Panc1 (cell line): ENCODE measurements at regions of chr2 and their contacts with region 1.

Region 1: GRCh38 chr2:165601928-165602521 is 132.5 kb downstream of the CSRNP3 start:
- DNase-seq: no peak
- ATAC-seq: no peak
- H3K4me3 ChIP-seq: no peak overlapping the region
- H3K27ac ChIP-seq: no peak overlapping the region
- H3K4me1 ChIP-seq: no peaks in the 10 kb centered on the region
- H3K27me3 ChIP-seq: no peaks in the 10 kb centered on the region
- CTCF ChIP-seq: no peak

Region 2: GRCh38 chr2:165549619-165550018 is 52.4 kb before region 1 on chr2:
- CTCF ChIA-PET with region 1: no interaction called
- POLR2A ChIA-PET with region 1: no interaction called
- in situ Hi-C with region 1: no loop called
- intact Hi-C with region 1: no loop called
- DNase-seq: no peak
- ATAC-seq: no peak
- H3K4me3 ChIP-seq: no peak overlapping the region
- H3K27ac ChIP-seq: no peak overlapping the region
- H3K4me1 ChIP-seq: no peaks in the 10 kb centered on the region
- H3K27me3 ChIP-seq: no peaks in the 10 kb centered on the region
- CTCF ChIP-seq: no peak

Region 3: GRCh38 chr2:165634855-165635254 is 32.8 kb after region 1 on chr2:
- CTCF ChIA-PET with region 1: no interaction called
- POLR2A ChIA-PET with region 1: no interaction called
- in situ Hi-C with region 1: no loop called
- intact Hi-C with region 1: no loop called
- DNase-seq: no peak
- ATAC-seq: no peak
- H3K4me3 ChIP-seq: no peak overlapping the region
- H3K27ac ChIP-seq: no peak overlapping the region
- H3K4me1 ChIP-seq: no peaks in the 10 kb centered on the region
- H3K27me3 ChIP-seq: no peaks in the 10 kb centered on the region
- CTCF ChIP-seq: no peak

Region 4: GRCh38 chr2:166607880-166608279 is 1005.9 kb after region 1 on chr2:
- CTCF ChIA-PET with region 1: interaction called, 10 read pairs
- POLR2A ChIA-PET with region 1: no interaction called
- in situ Hi-C with region 1: no loop called
- intact Hi-C with region 1: no loop called
- DNase-seq: no peak
- ATAC-seq: no peak
- H3K4me3 ChIP-seq: no peak overlapping the region
- H3K27ac ChIP-seq: no peak overlapping the region
- H3K4me1 ChIP-seq: no peaks in the 10 kb centered on the region
- H3K27me3 ChIP-seq: no peaks in the 10 kb centered on the region
- CTCF ChIP-seq: no peak

Region 5: DNA sequence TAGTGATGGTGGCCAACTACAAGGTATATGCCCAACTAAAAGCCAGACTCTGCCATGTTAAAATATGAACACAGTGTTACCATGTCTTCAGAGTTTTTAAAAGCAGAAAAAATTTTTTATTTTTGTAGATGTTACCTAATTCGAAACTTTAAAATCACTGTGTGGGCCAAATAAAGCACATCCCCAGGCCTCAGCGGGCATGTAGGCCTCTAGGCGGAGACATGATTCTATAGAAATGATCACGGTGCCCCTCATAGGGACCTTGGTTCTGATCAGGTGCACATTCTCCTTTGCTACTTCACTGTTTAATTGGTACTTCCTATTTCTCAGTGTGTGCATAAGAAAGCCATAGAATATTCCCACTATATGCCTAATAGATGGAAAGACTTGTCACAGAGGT is 1635.5 kb after region 1 on chr2:
- CTCF ChIA-PET with region 1: no interaction called
- POLR2A ChIA-PET with region 1: interaction called, 14 read pairs
- in situ Hi-C with region 1: no loop called
- intact Hi-C with region 1: no loop called
- DNase-seq: no peak
- ATAC-seq: no peak
- H3K4me3 ChIP-seq: no peak overlapping the region
- H3K27ac ChIP-seq: no peak overlapping the region
- H3K4me1 ChIP-seq: no peaks in the 10 kb centered on the region
- H3K27me3 ChIP-seq: no peaks in the 10 kb centered on the region
- CTCF ChIP-seq: 0 out of 2 replicates have a peak, but pooled peaks have one; percentile 7